ENCODE measurements at regions of chr1 and their contacts with region 1.

Region 1: GRCh38 chr1:161165742-161166668 is at the start of gene PPOX:
- DNase-seq: peak; percentile 85 to 97 (median 88)
- ATAC-seq: peak; percentile 90
- H3K4me3 ChIP-seq: peak within 1 kb of the TSS; percentile 95
- H3K4me3 Mint-ChIP-seq: peak within 1 kb of the TSS; percentile 93
- H3K27ac ChIP-seq: peak within 1 kb of the TSS; percentile 85 to 86
- H3K27ac Mint-ChIP-seq: peak within 1 kb of the TSS; percentile 98
- H3K4me1 ChIP-seq: peaks cover 43% of the 10 kb centered on the region
- H3K4me1 Mint-ChIP-seq: peaks cover 66% of the 10 kb centered on the region
- H3K27me3 ChIP-seq: no peaks in the 10 kb centered on the region
- H3K27me3 Mint-ChIP-seq: no peaks in the 10 kb centered on the region
- CTCF ChIP-seq: peak; percentile 61
- total RNA-seq, gene PPOX: 28.6 to 31.5 TPM

Region 2: GRCh38 chr1:160702100-160702499 is 463.9 kb before region 1 on chr1:
- CTCF ChIA-PET with region 1: no interaction called
- POLR2A ChIA-PET with region 1: no interaction called
- intact Hi-C with region 1: no loop called
- DNase-seq: no peak
- ATAC-seq: no peak
- H3K4me3 ChIP-seq: no peak overlapping the region
- H3K4me3 Mint-ChIP-seq: peak overlapping the region; percentile 66
- H3K27ac ChIP-seq: peak overlapping the region in 1 of 2 donors; percentile 3
- H3K27ac Mint-ChIP-seq: no peak overlapping the region
- H3K4me1 ChIP-seq: peaks cover 61% of the 10 kb centered on the region
- H3K4me1 Mint-ChIP-seq: peaks cover 39% of the 10 kb centered on the region
- H3K27me3 ChIP-seq: no peaks in the 10 kb centered on the region
- H3K27me3 Mint-ChIP-seq: no peaks in the 10 kb centered on the region
- CTCF ChIP-seq: no peak

Region 3: DNA sequence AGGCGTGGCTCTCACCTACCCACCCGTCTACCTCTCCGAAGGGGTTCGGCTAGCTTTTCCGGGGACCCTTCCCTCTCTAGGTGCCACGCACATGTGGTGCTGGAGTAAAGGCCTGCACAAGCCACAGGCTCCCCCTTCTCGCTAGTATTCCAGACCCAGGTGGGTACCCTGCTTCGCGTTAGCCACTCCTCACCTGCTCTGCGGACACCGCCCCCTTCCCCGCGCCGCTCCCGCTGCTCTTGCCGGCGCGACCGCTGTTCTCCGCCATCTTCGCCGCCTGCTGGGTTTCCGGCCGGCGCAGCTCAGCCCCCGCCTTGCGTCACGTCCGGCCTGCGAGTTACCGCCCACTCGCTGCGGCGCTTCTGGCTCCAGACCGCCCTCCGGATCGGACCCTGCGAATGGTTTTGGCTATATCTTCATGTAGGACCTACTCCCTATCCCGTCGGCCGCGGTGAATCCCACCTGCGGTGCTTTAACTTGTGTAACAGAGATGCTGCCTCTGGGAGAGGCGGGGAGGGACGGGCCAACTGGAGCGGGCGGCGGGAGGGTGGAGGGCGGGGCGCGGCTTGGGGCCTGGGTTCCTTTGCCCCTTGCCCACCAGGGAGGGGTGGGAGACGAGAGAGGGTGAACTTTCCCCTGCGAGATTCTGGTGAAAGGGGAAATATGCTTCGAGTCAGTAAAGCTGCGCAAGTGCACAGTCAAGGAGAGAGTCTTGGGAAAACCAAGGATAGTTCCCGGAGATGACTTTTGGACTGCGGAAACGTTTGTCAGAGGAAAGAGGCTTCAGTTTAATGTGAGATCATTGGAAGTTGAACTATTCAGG is 48.0 kb before region 1 on chr1 and contains the starts of genes NIT1 and PFDN2:
- CTCF ChIA-PET with region 1: interaction called, 12 read pairs
- POLR2A ChIA-PET with region 1: interaction called, 9 read pairs
- intact Hi-C with region 1: no loop called
- DNase-seq: peak; percentile 65 to 93 (median 78)
- ATAC-seq: peak; percentile 71
- H3K4me3 ChIP-seq: peak within 1 kb of the TSS; percentile 91
- H3K4me3 Mint-ChIP-seq: peak within 1 kb of the TSS; percentile 97
- H3K27ac ChIP-seq: peak within 1 kb of the TSS; percentile 81 to 91
- H3K27ac Mint-ChIP-seq: peak within 1 kb of the TSS; percentile 91
- H3K4me1 ChIP-seq: peaks cover 53% of the 10 kb centered on the region
- H3K4me1 Mint-ChIP-seq: peaks cover 67% of the 10 kb centered on the region
- H3K27me3 ChIP-seq: no peaks in the 10 kb centered on the region
- H3K27me3 Mint-ChIP-seq: no peaks in the 10 kb centered on the region
- CTCF ChIP-seq: no peak
- total RNA-seq, gene NIT1: 15.9 to 18.0 TPM
- total RNA-seq, gene PFDN2: 46.2 to 57.7 TPM

Region 4: GRCh38 chr1:161153679-161154426 is 12.2 kb before region 1 on chr1 and contains the start of gene UFC1:
- CTCF ChIA-PET with region 1: interaction called, 11 read pairs
- POLR2A ChIA-PET with region 1: interaction called, 24 read pairs
- intact Hi-C with region 1: no loop called
- DNase-seq: peak; percentile 67 to 96 (median 76)
- ATAC-seq: peak; percentile 91
- H3K4me3 ChIP-seq: peak within 1 kb of the TSS; percentile 97
- H3K4me3 Mint-ChIP-seq: peak within 1 kb of the TSS; percentile 98
- H3K27ac ChIP-seq: peak within 1 kb of the TSS; percentile 96 to 99
- H3K27ac Mint-ChIP-seq: peak within 1 kb of the TSS; percentile 99
- H3K4me1 ChIP-seq: peaks cover 19% of the 10 kb centered on the region
- H3K4me1 Mint-ChIP-seq: peaks cover 42% of the 10 kb centered on the region
- H3K27me3 ChIP-seq: no peaks in the 10 kb centered on the region
- H3K27me3 Mint-ChIP-seq: no peaks in the 10 kb centered on the region
- CTCF ChIP-seq: no peak
- total RNA-seq, gene UFC1: 96.6 to 97.8 TPM

Region 5: GRCh38 chr1:161185282-161185682 is 19.3 kb after region 1 on chr1:
- CTCF ChIA-PET with region 1: interaction called, 18 read pairs
- POLR2A ChIA-PET with region 1: interaction called, 57 read pairs
- intact Hi-C with region 1: loop called in 1 of 2 experiments (anchors 2 kb)
- DNase-seq: peak; percentile 59 to 96 (median 74)
- ATAC-seq: peak; percentile 78
- H3K4me3 ChIP-seq: peak overlapping the region; percentile 41
- H3K4me3 Mint-ChIP-seq: peak overlapping the region; percentile 80
- H3K27ac ChIP-seq: peak overlapping the region; percentile 61 to 77
- H3K27ac Mint-ChIP-seq: peak overlapping the region; percentile 97
- H3K4me1 ChIP-seq: peaks cover 90% of the 10 kb centered on the region
- H3K4me1 Mint-ChIP-seq: peaks cover 74% of the 10 kb centered on the region
- H3K27me3 ChIP-seq: no peaks in the 10 kb centered on the region
- H3K27me3 Mint-ChIP-seq: no peaks in the 10 kb centered on the region
- CTCF ChIP-seq: no peak

Region 6: GRCh38 chr1:161201828-161202725 is 36.1 kb after region 1 on chr1 and contains the start of gene NDUFS2:
- CTCF ChIA-PET with region 1: interaction called, 16 read pairs
- POLR2A ChIA-PET with region 1: interaction called, 58 read pairs
- intact Hi-C with region 1: loop called in 1 of 2 experiments (anchors 2 kb)
- DNase-seq: peak; percentile 90 to 99 (median 94)
- ATAC-seq: peak; percentile 99
- H3K4me3 ChIP-seq: peak within 1 kb of the TSS; percentile 66
- H3K4me3 Mint-ChIP-seq: peak within 1 kb of the TSS; percentile 99
- H3K27ac ChIP-seq: peak within 1 kb of the TSS; percentile 85 to 86
- H3K27ac Mint-ChIP-seq: peak within 1 kb of the TSS; percentile 95
- H3K4me1 ChIP-seq: peaks cover 47% of the 10 kb centered on the region
- H3K4me1 Mint-ChIP-seq: peaks cover 66% of the 10 kb centered on the region
- H3K27me3 ChIP-seq: no peaks in the 10 kb centered on the region
- H3K27me3 Mint-ChIP-seq: no peaks in the 10 kb centered on the region
- CTCF ChIP-seq: no peak
- total RNA-seq, gene NDUFS2: 49.9 to 55.7 TPM

Region 7: GRCh38 chr1:161631076-161631475 is 465.1 kb after region 1 on chr1 and contains the start of gene FCGR3B:
- CTCF ChIA-PET with region 1: no interaction called
- POLR2A ChIA-PET with region 1: no interaction called
- intact Hi-C with region 1: no loop called
- DNase-seq: no peak
- ATAC-seq: no peak
- H3K4me3 ChIP-seq: no peak within 1 kb of the TSS
- H3K4me3 Mint-ChIP-seq: no peak within 1 kb of the TSS
- H3K27ac ChIP-seq: no peak within 1 kb of the TSS
- H3K27ac Mint-ChIP-seq: no peak within 1 kb of the TSS
- H3K4me1 ChIP-seq: peaks cover 6% of the 10 kb centered on the region
- H3K4me1 Mint-ChIP-seq: peaks cover 6% of the 10 kb centered on the region
- H3K27me3 ChIP-seq: no peaks in the 10 kb centered on the region
- H3K27me3 Mint-ChIP-seq: no peaks in the 10 kb centered on the region
- CTCF ChIP-seq: no peak
- total RNA-seq, gene FCGR3B: not detected